Cardiac septum (tissue), 1 donor: ENCODE measurements at regions of chr15 and their contacts with region 1.

Region 1: DNA sequence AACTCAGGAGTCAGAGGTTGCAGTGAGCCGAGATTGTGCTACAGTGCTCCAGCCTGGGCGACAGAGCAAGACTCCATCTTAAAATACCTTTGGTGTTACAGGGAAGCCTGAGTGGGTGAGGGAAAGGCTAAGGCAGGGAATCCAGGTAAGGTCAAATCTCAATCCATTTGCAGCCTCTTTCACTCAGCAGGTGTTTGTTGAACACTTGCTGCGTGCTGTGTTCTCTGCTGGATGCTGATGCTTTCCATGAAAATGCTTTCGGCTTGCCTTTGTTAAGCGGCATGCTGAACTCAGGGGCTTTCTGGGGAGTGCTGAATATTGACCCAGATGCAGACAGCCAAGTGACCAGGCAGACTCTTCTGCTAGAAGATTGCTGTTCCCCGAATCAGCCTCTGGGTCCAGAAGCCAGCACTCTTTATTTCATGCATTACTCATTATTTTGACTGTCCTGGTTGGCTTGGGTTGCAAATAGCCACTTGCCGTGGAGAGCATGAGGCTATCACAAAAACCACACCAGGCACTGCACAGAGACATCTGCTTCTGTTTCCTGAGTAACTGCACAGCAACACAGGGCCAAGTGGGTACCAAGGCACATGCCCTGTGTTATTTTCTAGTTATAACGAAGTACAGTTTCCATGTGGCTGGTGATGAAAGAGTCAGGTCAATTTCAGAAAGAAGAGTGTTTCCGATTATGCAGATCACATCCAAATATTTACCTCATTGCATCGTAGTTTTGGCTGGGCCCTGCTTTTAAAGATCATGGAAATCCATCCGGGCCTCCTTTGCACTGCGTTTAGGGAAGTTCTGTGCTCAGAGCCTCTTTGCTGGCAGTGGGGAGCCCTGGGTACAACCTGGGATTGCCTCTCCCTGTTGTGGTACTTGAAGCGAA is 88.6 kb downstream of the THSD4 start:
- DNase-seq: no peak

Region 2: GRCh38 chr15:71224024-71224423 is 20.2 kb after region 1 on chr15:
- intact Hi-C with region 1: loop called (anchors 2 kb)
- DNase-seq: no peak

Region 3: DNA sequence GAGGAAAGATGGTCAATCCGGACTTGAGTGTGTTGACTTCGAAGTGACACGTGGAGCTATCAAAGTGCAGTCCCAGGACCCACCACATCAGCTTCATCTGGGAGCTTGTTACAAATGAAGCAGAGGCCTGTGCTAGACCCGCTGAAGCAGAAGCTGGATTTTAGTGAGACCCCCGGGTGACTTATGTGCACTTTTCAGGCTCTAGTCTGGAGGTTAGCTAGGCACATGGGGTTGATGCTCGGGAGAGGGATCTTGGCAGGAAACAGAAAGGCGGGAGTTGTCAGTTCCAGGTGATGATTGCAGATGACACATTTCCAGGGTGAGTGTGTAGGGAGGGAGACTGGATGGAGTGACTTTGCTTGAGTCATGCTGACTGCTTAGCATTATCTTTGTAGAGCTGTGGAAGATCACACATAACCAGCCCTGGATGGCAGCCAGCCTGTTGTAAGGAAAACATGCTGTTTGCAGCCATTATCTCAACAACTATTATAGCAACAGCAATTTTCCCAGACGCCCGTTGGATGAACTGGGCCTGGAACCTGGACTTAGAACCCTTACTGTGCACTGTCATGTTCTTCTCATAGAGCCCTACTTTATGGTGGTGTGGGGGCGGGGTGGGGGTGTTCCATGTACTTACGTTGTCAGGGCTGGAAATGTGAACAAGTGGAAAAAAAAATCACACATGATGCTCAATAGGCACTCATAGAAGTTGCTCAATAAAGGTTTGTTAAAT is 33.8 kb after region 1 on chr15:
- intact Hi-C with region 1: no loop called
- DNase-seq: peak; percentile 82